ENCODE measurements at regions of chr10 and their contacts with region 1.

Region 1: DNA sequence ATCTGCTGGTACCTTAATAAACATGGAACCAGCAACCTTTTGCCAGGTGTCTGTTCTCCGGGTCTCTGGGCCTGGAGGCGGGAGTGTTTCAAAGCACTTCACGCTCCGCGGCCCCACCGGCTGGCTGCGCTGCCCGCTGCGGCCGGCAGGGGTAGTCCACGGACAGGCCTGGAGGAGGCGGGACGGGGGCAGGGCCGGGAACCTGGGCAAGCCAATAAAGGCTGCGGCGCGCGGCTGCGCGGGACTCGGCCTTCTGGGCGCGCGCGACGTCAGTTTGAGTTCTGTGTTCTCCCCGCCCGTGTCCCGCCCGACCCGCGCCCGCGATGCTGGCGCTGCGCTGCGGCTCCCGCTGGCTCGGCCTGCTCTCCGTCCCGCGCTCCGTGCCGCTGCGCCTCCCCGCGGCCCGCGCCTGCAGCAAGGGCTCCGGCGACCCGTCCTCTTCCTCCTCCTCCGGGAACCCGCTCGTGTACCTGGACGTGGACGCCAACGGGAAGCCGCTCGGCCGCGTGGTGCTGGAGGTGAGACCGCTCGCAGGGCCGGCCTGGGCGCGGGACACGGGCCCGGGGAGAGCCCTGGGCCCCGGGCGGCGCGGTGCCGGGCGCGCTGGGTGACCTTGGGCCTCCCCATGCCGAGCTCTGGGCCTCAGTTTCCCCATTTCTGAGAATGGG is at the start of gene PPIF:
- DNase-seq: peak; percentile 90 to 100 (median 96)

Region 2: DNA sequence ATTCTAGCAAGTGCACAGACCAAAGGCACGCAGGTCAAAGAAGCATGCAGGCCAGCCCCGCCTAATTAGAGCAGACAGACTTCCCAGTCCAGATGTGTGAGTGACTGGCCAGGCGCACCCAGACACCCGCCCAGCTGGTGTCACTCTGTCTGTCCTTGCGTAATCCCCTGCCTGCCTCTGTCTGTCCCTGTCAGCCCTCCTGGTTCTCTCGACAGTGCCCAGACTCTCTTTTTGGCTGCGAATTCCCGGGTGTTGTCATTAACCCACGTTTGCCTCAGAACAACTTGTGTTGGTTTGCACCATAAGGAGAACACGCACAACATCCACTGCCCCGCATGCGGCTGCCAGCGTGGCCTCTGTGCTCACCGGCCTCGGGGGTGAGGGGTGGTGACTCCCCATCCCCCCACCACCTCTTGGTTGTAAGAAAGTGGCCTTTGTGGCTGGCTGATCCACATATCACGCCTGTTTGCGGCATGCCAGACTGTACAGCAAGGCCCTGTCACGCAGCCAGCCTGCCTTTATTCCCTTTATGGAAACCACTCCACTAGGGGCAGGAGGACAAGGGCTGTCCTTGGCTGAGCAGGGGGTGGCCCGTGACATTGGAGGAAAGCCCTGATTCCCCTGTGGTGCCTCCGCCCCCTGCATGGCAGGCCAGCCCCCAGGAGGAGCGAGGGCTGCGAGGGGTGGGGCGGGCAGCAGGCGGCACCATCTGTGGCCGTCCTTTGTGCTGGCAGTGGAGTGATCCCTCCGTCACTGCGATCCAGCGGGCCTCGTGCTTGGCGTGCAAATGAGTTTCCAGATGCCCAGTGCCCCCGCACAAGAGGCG is 72.9 kb before region 1 on chr10:
- intact Hi-C with region 1: loop called (anchors 2 kb)
- DNase-seq: peak; percentile 88 to 99 (median 92)

Region 3: DNA sequence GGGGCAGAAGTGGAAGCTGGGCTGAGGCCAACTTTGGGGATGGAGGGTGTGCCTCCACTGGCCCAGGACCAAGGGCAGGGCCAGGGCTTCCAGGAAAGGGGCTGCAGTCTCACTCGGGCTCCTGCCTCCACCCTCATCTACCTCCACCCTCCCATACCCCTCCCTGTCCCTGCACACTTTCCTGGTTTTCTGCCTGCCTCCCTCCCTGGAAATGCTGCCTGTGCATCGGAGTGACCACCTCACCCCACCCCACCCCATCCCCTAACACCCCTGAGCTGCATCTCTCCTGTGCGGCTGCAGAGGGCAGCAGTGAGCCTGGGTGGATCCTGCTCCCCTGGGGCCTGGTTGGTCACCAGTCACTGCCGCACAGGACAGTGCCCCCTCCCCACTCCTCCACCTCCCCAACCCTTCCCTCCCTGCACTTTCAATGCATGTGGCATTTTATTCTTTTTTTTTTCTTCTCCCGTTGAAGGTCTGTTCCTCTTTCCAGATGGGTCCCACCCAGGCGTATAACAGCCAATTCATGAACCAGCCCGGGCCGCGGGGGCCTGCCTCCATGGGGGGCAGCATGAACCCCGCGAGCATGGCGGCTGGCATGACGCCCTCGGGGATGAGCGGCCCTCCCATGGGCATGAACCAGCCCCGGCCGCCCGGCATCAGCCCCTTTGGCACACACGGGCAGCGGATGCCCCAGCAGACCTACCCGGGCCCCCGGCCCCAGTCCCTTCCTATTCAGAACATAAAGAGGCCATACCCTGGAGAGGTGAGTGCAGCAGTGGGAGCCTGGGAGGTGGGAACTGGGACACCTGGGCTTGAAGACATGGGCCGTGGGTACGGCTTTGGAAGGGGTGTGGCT is 54.2 kb before region 1 on chr10:
- intact Hi-C with region 1: loop called (anchors 5 kb)
- DNase-seq: peak in 3 of 10 donors; percentile 41 to 91 (median 61)

Measured in posterior cingulate gyrus (tissue), 11 donors.